ENCODE measurements at regions of chr2 and their contacts with region 1.

Region 1: GRCh38 chr2:235789552-235789951 is 295.7 kb downstream of the AGAP1 start:
- DNase-seq: no peak
- ATAC-seq: no peak
- H3K4me3 ChIP-seq: no peak overlapping the region
- H3K27ac ChIP-seq: no peak overlapping the region
- H3K4me1 ChIP-seq: no peaks in the 10 kb centered on the region
- H3K27me3 ChIP-seq: no peaks in the 10 kb centered on the region
- CTCF ChIP-seq: no peak

Region 2: GRCh38 chr2:235669269-235669831 is 120.2 kb before region 1 on chr2:
- CTCF ChIA-PET with region 1: interaction called, 12 read pairs
- POLR2A ChIA-PET with region 1: no interaction called
- in situ Hi-C with region 1: no loop called
- intact Hi-C with region 1: no loop called
- DNase-seq: no peak
- ATAC-seq: peak; percentile 93
- H3K4me3 ChIP-seq: peak overlapping the region; percentile 31 to 53; a peak in 3 of 4 replicates
- H3K27ac ChIP-seq: no peak overlapping the region
- H3K4me1 ChIP-seq: peaks cover 25% of the 10 kb centered on the region
- H3K27me3 ChIP-seq: no peaks in the 10 kb centered on the region
- CTCF ChIP-seq: no peak

Region 3: GRCh38 chr2:235958221-235958931 is 168.8 kb after region 1 on chr2:
- CTCF ChIA-PET with region 1: no interaction called
- POLR2A ChIA-PET with region 1: no interaction called
- in situ Hi-C with region 1: no loop called
- intact Hi-C with region 1: no loop called
- DNase-seq: no peak
- ATAC-seq: no peak
- H3K4me3 ChIP-seq: no peak overlapping the region
- H3K27ac ChIP-seq: no peak overlapping the region
- H3K4me1 ChIP-seq: no peaks in the 10 kb centered on the region
- H3K27me3 ChIP-seq: no peaks in the 10 kb centered on the region
- CTCF ChIP-seq: no peak